Activated CD4-positive, alpha-beta T cell treated with anti-CD3 and anti-CD28 coated beads, Interleukin-2, amount 10 ng/mL, durations not matched to agents 24 days and 14 days (primary cell): ENCODE measurements at regions of chr14 and their contacts with region 1.

Region 1: DNA sequence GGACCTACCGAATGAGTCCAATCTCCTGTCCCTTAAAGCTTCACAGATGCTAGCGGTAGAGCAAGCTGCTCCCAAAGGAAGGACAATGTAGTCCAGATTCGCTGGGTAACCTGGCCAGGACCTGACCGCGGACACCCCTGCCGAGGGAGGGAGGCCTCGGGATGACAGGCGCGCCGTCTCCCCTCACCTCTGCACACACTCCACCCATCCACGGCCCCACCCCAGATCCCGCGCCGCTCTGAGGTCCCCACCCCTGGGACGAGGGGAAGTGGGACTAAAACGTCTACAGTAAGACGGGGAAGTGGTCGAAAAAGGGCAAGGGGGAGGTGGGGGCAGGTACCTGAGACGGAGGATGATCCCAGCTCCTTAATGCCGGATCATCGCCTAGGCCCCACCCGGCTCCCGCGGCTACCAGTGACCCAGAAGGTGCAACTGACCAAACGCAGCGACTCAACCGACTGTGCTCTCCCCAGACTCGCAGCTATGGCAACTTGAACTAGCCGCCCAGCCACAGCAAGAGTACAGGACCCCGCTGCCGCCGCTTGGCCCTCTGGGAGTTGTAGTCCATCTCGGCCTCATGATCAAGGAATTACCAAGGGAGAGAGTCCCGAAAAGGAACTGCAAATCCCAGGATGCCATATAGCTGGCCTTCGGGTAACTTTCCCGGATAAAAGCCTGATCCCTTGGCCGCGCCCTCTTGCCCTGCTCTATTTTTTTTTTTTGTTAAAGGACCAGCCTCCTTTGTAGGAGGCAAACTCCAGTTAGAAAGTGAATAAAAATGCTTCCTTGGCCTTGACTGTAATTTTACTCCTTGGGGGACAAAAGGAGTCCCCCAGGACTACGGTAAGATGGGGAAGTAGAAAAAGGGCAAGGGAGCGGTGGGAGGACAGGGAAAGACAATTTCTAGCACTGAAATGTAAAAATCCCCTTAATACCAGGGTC is at the start of gene CEP128:
- DNase-seq: peak; percentile 95
- H3K4me3 Mint-ChIP-seq: peak within 1 kb of the TSS; percentile 84
- H3K27ac Mint-ChIP-seq: peak within 1 kb of the TSS; percentile 85
- H3K4me1 Mint-ChIP-seq: peaks cover 27% of the 10 kb centered on the region
- H3K27me3 Mint-ChIP-seq: no peaks in the 10 kb centered on the region
- total RNA-seq, gene CEP128: 20.1 and 20.4 TPM in 2 replicates

Region 2: DNA sequence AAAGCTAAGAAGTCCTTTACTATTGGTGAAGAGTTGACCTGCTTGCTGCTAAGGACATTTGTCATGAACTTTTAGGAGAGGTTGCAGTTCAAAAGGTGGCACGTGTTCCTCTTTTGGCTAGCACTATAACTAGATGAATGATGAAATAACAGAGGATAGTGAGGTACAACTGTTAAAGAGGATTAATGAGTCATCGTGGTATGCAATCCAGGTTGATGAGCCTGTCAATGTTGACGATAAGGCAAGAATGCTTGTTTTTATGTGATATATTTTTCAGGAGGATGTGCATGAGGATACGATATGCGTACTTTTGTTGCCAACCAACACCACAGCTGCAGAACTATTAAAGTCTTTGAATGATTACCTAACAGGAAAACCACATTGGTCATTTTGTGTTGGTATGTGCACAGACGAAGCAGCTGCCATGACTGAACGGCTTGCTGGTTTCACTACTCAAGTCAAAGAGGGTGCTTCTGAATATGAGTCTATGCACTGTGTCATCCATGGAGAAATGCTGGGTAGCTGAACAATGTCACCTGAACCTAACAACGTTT is 10.6 kb before region 1 on chr14:
- intact Hi-C with region 1: loop called (anchors 1 kb)
- DNase-seq: peak; percentile 87
- H3K4me3 Mint-ChIP-seq: peak overlapping the region; percentile 73
- H3K27ac Mint-ChIP-seq: peak overlapping the region; percentile 90
- H3K4me1 Mint-ChIP-seq: peaks cover 51% of the 10 kb centered on the region
- H3K27me3 Mint-ChIP-seq: no peaks in the 10 kb centered on the region

Region 3: DNA sequence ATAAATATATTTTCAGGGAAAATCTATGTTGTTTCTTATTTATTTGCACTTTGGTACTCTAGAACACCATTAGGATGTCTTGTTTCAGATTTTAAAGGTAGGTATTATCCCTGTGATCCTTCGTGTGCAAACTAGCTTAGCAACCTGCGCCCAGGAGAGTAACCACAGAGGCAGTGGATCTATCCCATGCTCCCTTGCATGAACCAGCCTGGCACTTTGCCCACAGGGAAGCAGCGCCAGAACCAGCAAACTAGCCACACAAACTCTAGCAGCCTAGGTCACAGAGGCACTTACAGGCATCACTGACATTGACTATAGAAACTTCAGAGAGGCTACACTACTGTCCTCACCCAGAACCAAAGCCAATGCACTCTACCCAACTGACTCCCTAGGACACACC is 90.0 kb after region 1 on chr14:
- intact Hi-C with region 1: no loop called
- DNase-seq: no peak
- H3K4me3 Mint-ChIP-seq: no peak overlapping the region
- H3K27ac Mint-ChIP-seq: no peak overlapping the region
- H3K4me1 Mint-ChIP-seq: no peaks in the 10 kb centered on the region
- H3K27me3 Mint-ChIP-seq: peaks cover 4% of the 10 kb centered on the region

Region 4: GRCh38 chr14:81170104-81170828 is 228.8 kb after region 1 on chr14:
- intact Hi-C with region 1: loop called (anchors 1 kb)
- DNase-seq: peak; percentile 96
- H3K4me3 Mint-ChIP-seq: peak overlapping the region; percentile 96
- H3K27ac Mint-ChIP-seq: peak overlapping the region; percentile 99
- H3K4me1 Mint-ChIP-seq: peaks cover 40% of the 10 kb centered on the region
- H3K27me3 Mint-ChIP-seq: no peaks in the 10 kb centered on the region

Region 5: GRCh38 chr14:81474148-81474492 is 532.6 kb after region 1 on chr14:
- intact Hi-C with region 1: loop called (anchors 5 kb)
- DNase-seq: peak; percentile 71
- H3K4me3 Mint-ChIP-seq: peak overlapping the region; percentile 68
- H3K27ac Mint-ChIP-seq: peak overlapping the region; percentile 88
- H3K4me1 Mint-ChIP-seq: peaks cover 55% of the 10 kb centered on the region
- H3K27me3 Mint-ChIP-seq: no peaks in the 10 kb centered on the region

Region 6: DNA sequence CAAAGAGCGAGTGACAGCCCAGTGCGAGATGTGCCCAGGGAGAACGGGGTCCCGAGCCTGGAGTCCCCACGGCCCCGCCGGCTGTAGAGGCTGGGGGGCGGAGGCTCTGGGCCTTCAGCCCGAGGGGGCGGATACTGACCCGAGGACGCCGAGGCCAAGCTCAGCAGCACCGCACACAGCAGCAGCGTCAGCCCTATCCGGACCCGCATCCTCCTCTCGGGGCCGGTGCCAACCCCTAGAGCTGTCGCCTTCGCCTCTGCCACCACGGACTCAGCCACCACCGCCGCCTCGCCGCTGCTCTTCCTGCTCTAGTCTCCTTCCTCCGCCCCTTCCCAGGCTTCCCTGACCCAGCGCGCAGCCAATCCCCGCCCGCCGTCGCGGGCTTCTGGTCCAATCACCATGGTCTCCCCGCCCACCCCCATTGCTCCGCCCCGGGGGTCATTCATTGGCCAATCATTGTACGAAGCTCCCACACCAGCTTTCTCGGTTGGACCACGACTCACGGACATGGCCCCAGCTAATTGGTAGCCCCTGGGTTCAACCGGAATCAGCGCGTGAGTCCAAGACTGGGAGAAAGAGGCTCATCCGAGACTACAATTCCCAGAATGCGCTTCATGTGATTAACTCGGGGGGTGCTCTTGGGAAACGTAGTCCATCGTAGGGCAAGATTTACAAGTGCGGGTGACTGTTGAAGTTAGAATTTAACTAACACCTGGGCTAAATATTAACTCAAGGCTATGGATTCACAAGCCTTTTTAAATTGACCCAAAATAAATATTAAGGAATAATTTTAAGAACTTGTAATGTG is 592.2 kb after region 1 on chr14 and contains the start of gene SEL1L:
- intact Hi-C with region 1: loop called (anchors 5 kb)
- DNase-seq: peak; percentile 100
- H3K4me3 Mint-ChIP-seq: peak within 1 kb of the TSS; percentile 98
- H3K27ac Mint-ChIP-seq: peak within 1 kb of the TSS; percentile 91
- H3K4me1 Mint-ChIP-seq: peaks cover 33% of the 10 kb centered on the region
- H3K27me3 Mint-ChIP-seq: peaks cover 3% of the 10 kb centered on the region
- total RNA-seq, gene SEL1L: 57.4 and 58.8 TPM in 2 replicates